Mammary epithelial cell (primary cell): ENCODE measurements at regions of chr1 and their contacts with region 1.

Region 1: DNA sequence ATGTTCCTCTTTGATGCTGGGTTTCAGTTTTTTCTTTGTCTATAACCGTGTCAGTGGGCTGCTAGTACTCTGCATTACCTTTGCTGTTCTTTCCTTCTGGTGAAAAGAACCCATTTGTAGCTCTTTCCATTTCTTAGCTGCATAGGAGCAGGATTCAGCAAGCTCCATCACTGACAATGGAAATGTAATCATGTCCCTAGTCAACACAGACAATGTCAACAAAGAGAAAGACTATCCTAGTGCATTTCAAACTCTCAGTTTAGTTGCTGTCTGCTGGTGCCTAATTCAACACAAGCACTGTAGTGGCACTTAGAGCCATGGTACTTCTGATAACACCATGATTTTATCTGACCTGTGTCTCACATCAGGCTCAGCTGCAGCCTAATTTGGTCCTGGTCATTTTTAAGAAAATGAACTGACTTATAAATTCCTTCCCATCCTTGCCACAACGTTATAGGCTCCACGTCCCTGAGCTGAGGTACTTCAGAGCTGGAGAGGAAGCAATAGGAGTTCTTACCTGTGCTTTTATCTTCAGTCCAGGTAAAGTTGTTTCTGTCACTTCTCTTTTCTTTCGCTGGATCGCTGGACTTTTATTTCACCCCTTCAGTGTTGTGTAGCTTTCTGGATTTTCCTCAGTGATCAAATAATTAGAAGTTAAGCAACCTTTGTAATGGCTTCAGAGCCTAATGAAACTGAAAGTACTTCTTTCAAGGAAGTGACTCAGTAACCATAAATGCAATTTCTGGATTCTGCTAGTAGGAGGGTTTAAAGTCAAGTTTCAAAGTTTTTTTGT is at the start of gene GBP3:
- DNase-seq: peak; percentile 74
- H3K4me3 ChIP-seq: peak within 1 kb of the TSS; percentile 58 to 79 (median 75)
- H3K27ac ChIP-seq: peak within 1 kb of the TSS; percentile 77
- H3K4me1 ChIP-seq: peaks cover 7% of the 10 kb centered on the region
- H3K27me3 ChIP-seq: no peaks in the 10 kb centered on the region
- CTCF ChIP-seq: no peak
- total RNA-seq, gene GBP3: 20.2 to 27.2 TPM

Region 2: GRCh38 chr1:89064632-89065031 is 42.3 kb after region 1 on chr1:
- CTCF ChIA-PET with region 1: no interaction called
- dilution Hi-C with region 1: no loop called
- in situ Hi-C with region 1: no loop called
- intact Hi-C with region 1: loop called (anchors 5 kb)
- DNase-seq: no peak
- H3K4me3 ChIP-seq: peak overlapping the region; percentile 56 to 80 (median 75)
- H3K27ac ChIP-seq: peak overlapping the region; percentile 60
- H3K4me1 ChIP-seq: peaks cover 4% of the 10 kb centered on the region
- H3K27me3 ChIP-seq: no peaks in the 10 kb centered on the region
- CTCF ChIP-seq: no peak